MCF 10A (cell line): ENCODE measurements at regions of chr15 and their contacts with region 1.

Region 1: DNA sequence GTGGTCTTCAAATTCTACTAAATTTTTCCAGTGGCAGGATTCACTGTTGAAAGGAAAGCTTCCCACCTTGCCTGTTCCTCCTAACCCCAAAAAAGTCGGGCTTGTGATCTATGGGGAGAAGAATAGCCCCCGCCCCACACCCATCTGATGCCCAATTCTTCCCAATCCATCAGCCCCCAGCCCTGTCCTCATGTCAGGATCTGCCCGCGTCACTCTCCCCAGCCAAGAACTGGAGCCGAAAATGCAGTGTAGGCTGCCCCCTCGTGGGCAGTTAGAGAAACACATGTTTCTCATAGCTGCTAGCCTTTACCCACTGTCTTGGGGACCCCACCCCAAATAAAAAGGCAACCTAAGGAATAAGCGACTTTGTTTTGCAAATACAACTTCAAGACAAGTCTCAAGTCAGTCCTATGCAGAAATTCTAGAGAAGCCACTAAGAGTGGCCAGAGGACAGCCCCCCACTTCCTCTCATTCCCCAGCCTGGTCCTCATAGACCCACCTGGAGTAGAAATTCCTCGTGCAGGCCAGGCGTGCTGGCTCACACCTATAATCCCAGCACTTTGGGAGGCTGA is 13.0 kb upstream of the CSK start:
- DNase-seq: peak; percentile 70
- H3K4me3 Mint-ChIP-seq: no peak overlapping the region
- H3K27ac Mint-ChIP-seq: no peak overlapping the region
- H3K4me1 Mint-ChIP-seq: peaks cover 6% of the 10 kb centered on the region
- H3K27me3 Mint-ChIP-seq: no peaks in the 10 kb centered on the region
- CTCF ChIP-seq: peak; percentile 81

Region 2: DNA sequence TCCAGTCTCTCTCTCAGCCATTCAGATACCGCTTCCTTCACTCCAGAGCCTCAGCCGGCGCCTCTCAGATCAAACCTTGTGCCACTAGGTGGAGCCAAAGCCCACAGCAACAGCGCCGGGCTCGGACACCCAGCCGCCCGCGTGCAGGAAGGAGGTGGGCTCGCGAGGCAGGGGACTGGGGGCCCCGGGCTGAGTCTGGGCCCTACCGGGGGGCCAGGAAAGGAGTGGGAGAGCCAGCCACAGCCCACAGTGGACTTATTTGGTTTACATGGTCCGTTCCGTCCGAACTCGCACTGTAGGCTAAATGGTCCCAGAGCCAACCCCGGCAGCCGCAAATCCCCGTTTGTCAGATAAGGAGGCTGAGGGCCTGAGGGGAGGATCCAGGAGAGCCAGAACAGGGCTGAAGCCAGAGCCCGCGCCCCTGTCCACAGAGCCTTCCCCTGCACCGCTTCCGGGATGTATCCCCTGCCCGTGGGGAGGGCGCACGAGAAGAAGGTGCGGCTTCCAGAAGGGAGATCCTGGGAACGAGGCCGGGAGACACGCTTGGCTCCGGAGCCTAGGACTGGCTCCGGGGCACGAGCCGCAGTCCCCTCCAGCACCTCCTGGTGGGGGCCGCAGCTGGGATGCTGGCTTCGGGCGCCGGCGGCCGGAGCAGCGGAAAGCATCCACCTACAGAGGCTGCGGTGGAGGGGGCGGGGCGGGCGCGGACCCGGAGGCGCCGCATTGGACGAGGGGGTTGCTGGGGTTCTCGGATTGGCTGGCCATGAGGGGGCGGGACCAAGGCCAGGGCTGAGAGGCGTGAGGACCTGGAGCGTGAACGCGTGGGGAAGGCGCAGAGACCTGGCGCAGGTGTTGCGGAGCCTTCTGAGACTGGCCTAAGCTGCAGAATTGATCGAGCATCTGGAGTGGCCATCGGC is 394.9 kb before region 1 on chr15:
- CTCF ChIA-PET with region 1: interaction called, 9 read pairs
- POLR2A ChIA-PET with region 1: no interaction called
- intact Hi-C with region 1: loop called (anchors 5 kb)
- DNase-seq: peak; percentile 92
- H3K4me3 Mint-ChIP-seq: peak overlapping the region; percentile 78
- H3K27ac Mint-ChIP-seq: no peak overlapping the region
- H3K4me1 Mint-ChIP-seq: no peaks in the 10 kb centered on the region
- H3K27me3 Mint-ChIP-seq: peaks cover 37% of the 10 kb centered on the region
- CTCF ChIP-seq: peak; percentile 82

Region 3: DNA sequence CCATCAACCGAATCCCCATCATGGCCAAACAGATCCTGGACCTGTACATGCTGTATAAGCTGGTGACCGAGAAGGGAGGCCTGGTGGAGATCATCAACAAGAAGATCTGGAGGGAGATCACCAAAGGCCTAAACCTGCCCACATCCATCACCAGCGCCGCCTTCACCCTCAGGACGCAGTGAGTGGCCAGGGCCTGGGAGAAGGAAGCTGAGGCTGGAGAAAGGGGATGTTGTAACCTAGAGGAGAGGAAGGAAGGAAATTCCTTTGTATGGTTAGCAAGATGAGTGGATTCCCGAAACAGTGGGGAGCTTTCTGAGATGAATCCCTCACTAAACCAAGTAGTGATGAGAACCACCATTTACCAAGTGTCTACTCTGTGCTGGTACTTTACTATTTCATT is 179.0 kb before region 1 on chr15:
- CTCF ChIA-PET with region 1: no interaction called
- POLR2A ChIA-PET with region 1: no interaction called
- intact Hi-C with region 1: no loop called
- DNase-seq: no peak
- H3K4me3 Mint-ChIP-seq: no peak overlapping the region
- H3K27ac Mint-ChIP-seq: peak overlapping the region; percentile 39
- H3K4me1 Mint-ChIP-seq: peaks cover 6% of the 10 kb centered on the region
- H3K27me3 Mint-ChIP-seq: no peaks in the 10 kb centered on the region
- CTCF ChIP-seq: no peak

Region 4: DNA sequence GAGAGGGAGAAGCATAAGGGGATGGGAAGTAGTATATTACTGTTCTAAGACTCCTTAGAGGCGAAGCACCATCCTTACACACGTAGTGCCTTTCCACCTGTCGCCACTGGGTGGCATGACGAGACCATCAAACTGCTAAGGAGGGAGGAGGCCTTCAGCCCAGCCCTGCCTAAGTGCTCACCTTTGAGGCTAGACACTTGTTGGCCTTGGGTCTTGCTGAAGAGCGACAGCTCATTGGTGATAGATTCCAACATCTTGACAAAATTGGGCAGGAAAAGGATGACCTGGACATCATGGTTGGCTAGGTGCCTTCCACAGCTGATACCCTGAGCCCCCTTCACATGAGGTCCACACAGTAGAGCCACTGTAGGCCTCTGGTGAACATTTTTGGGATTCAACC is 133.6 kb before region 1 on chr15:
- CTCF ChIA-PET with region 1: interaction called, 632 read pairs
- POLR2A ChIA-PET with region 1: interaction called, 9 read pairs
- intact Hi-C with region 1: loop called (anchors 1 kb)
- DNase-seq: peak; percentile 81
- H3K4me3 Mint-ChIP-seq: no peak overlapping the region
- H3K27ac Mint-ChIP-seq: no peak overlapping the region
- H3K4me1 Mint-ChIP-seq: no peaks in the 10 kb centered on the region
- H3K27me3 Mint-ChIP-seq: no peaks in the 10 kb centered on the region
- CTCF ChIP-seq: peak; percentile 89

Region 5: DNA sequence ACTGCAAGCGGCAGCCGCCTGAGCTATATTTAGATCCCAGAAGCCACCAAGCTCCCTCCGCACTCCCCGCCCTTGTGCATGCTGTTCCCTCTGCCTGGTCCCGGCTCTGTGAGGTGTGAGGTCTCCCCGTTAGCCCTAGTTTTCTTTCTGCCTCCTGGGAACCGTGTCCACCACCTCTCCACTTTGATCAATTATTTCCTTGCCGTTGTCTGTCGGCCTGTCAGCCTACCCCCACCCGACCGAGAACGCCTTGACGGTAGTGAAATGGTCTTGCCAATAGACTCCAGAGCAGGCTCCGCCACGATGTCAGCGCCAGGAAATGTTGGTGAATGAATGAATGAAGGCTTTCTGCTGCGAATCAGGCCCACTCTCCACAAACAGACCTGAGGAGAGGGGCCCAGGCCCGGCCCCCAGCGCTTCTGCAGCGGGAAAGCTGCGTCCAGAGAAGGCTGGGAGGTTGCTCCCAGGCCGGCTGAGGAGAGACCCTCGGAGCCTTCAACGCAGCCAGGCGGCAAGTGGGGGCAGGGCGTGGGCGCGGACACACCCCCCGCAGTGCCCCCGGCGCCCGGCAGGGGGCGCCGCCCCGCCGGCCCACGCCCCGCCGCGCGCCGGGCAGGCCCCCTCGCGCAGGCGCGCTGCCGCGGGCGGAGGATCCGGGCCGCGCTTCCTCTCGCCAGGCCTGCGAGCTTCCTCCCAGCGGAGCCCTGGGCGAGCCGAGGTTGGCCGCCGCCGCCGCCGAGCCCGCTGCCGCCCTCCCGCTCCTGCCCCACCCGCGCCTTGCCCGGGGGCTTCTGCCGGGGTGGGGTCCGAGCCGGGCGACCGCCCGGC is 12.8 kb after region 1 on chr15 and contains the start of gene CSK:
- CTCF ChIA-PET with region 1: interaction called, 62 read pairs
- POLR2A ChIA-PET with region 1: interaction called, 11 read pairs
- intact Hi-C with region 1: no loop called
- DNase-seq: peak; percentile 68
- H3K4me3 Mint-ChIP-seq: peak within 1 kb of the TSS; percentile 92
- H3K27ac Mint-ChIP-seq: peak within 1 kb of the TSS; percentile 85
- H3K4me1 Mint-ChIP-seq: peaks cover 23% of the 10 kb centered on the region
- H3K27me3 Mint-ChIP-seq: no peaks in the 10 kb centered on the region
- CTCF ChIP-seq: peak; percentile 58
- total RNA-seq, gene CSK: 50.4 and 65.3 TPM in 2 replicates

Region 6: DNA sequence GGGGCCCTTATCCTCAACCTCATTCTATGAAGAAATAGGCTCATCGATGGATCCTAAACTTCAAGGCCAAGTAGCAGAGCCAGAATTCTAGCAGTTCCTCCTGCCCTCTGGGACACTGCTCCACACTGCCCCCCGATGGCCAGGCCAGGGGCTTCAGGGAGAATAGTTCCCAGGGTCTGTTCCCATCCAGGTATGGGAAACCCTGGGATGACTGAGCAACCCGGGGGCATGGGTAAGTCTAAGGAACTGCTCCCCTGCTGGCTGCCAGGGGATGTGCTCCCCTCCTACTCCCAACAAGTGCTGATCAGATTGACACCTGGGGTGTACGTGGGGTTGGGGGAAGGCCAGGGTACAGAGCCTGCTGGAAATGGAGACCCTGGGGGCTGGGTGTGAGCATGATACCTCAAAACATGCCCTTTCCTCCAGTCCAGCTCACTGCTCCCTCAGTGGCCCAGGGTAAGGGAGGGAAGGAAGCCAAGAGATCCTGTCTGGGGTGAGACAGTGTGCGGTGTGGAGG is 66.5 kb after region 1 on chr15:
- CTCF ChIA-PET with region 1: interaction called, 8 read pairs
- POLR2A ChIA-PET with region 1: interaction called, 7 read pairs
- intact Hi-C with region 1: loop called (anchors 1 kb)
- DNase-seq: peak; percentile 83
- H3K4me3 Mint-ChIP-seq: no peak overlapping the region
- H3K27ac Mint-ChIP-seq: no peak overlapping the region
- H3K4me1 Mint-ChIP-seq: peaks cover 6% of the 10 kb centered on the region
- H3K27me3 Mint-ChIP-seq: no peaks in the 10 kb centered on the region
- CTCF ChIP-seq: peak; percentile 69

Region 7: GRCh38 chr15:74897300-74897701 is 128.4 kb after region 1 on chr15:
- CTCF ChIA-PET with region 1: interaction called, 28 read pairs
- POLR2A ChIA-PET with region 1: interaction called, 4 read pairs
- intact Hi-C with region 1: loop called (anchors 1 kb)
- DNase-seq: no peak
- H3K4me3 Mint-ChIP-seq: no peak overlapping the region
- H3K27ac Mint-ChIP-seq: no peak overlapping the region
- H3K4me1 Mint-ChIP-seq: peaks cover 11% of the 10 kb centered on the region
- H3K27me3 Mint-ChIP-seq: no peaks in the 10 kb centered on the region
- CTCF ChIP-seq: no peak

Region 8: GRCh38 chr15:74950078-74951000 is 181.5 kb after region 1 on chr15:
- CTCF ChIA-PET with region 1: interaction called, 128 read pairs
- POLR2A ChIA-PET with region 1: interaction called, 4 read pairs
- intact Hi-C with region 1: loop called (anchors 1 kb)
- DNase-seq: peak; percentile 80
- H3K4me3 Mint-ChIP-seq: no peak overlapping the region
- H3K27ac Mint-ChIP-seq: no peak overlapping the region
- H3K4me1 Mint-ChIP-seq: peaks cover 7% of the 10 kb centered on the region
- H3K27me3 Mint-ChIP-seq: no peaks in the 10 kb centered on the region
- CTCF ChIP-seq: peak; percentile 97